ENCODE measurements at regions of chr6 and their contacts with region 1.

Region 1: DNA sequence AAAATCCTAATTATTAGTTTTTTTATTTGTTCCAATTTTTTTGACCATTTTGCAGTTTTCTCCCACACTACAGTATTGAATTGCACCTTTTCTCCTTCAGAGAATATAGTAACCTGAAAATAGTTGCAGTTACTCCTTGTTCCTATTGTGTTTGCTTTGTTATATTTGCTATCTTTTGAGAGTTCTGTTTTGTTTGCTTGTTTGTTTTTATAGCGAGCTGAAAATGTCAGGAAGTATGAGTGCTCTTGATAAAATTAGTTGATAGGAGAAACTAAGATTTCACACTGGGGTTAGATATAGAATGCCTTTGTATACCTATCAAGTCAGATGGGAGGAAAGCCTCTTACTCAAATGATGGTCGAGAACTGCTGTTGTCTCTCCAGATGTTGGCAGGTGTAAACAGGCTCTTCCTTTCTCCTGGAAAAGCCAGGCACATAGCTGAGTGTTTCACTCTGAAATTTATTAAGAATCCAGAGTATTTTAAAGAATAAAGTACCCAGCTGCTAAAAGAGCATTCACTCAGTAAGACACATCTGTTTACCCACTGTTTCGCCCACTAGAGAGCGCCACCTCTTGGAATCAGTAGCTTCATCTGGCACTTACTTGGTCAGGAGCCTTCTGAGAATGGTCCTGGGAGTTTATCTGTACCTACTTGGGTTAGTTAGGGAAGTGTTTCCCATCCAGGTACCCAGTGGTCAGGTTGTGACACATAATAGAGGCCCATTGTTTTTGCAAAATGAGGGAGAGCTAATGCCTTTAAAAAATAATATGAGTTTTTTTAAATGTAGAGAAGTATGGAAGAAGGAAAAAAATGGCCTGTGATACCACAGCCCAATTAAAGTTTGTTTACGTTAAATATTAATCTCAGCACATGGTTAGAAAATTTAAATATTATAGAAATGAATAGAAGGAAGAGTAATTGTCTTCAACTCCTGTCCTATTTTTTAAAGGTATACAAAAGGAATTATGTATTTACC is 11.2 kb downstream of the NT5DC1 start:
- DNase-seq: peak; percentile 42
- H3K4me3 ChIP-seq: no peak overlapping the region
- H3K27ac ChIP-seq: no peak overlapping the region
- H3K4me1 ChIP-seq: peaks cover 3% of the 10 kb centered on the region
- H3K27me3 ChIP-seq: no peaks in the 10 kb centered on the region
- CTCF ChIP-seq: peak; percentile 76 to 80

Region 2: GRCh38 chr6:116073765-116074419 is 37.9 kb before region 1 on chr6:
- CTCF ChIA-PET with region 1: no interaction called
- dilution Hi-C with region 1: no loop called
- in situ Hi-C with region 1: no loop called
- intact Hi-C with region 1: no loop called
- DNase-seq: peak; percentile 78
- H3K4me3 ChIP-seq: no peak overlapping the region
- H3K27ac ChIP-seq: no peak overlapping the region
- H3K4me1 ChIP-seq: peaks cover 24% of the 10 kb centered on the region
- H3K27me3 ChIP-seq: no peaks in the 10 kb centered on the region
- CTCF ChIP-seq: no peak

Region 3: GRCh38 chr6:116136933-116137340 is 25.1 kb after region 1 on chr6:
- CTCF ChIA-PET with region 1: no interaction called
- dilution Hi-C with region 1: no loop called
- in situ Hi-C with region 1: no loop called
- intact Hi-C with region 1: no loop called
- DNase-seq: no peak
- H3K4me3 ChIP-seq: no peak overlapping the region
- H3K27ac ChIP-seq: no peak overlapping the region
- H3K4me1 ChIP-seq: no peaks in the 10 kb centered on the region
- H3K27me3 ChIP-seq: no peaks in the 10 kb centered on the region
- CTCF ChIP-seq: no peak

Region 4: GRCh38 chr6:116210750-116211425 is 99.0 kb after region 1 on chr6:
- CTCF ChIA-PET with region 1: no interaction called
- dilution Hi-C with region 1: no loop called
- in situ Hi-C with region 1: no loop called
- intact Hi-C with region 1: loop called (anchors 5 kb)
- DNase-seq: peak; percentile 91
- H3K4me3 ChIP-seq: peak overlapping the region in 2 of 3 experiments; percentile 17 to 27
- H3K27ac ChIP-seq: peak overlapping the region; percentile 80
- H3K4me1 ChIP-seq: peaks cover 31% of the 10 kb centered on the region
- H3K27me3 ChIP-seq: no peaks in the 10 kb centered on the region
- CTCF ChIP-seq: no peak

Measured in mammary epithelial cell (primary cell).